ENCODE measurements at regions of chr5 and their contacts with region 1.

Region 1: GRCh38 chr5:33850100-33850594 is 41.6 kb downstream of the ADAMTS12 start:
- DNase-seq: peak; percentile 75
- ATAC-seq: no peak
- H3K4me3 ChIP-seq: no peak overlapping the region
- H3K27ac ChIP-seq: no peak overlapping the region
- H3K4me1 ChIP-seq: peaks cover 28% of the 10 kb centered on the region
- H3K27me3 ChIP-seq: no peaks in the 10 kb centered on the region
- CTCF ChIP-seq: no peak
- POLR2A ChIP-seq: no peak
- RAD21 ChIP-seq: no peak

Region 2: GRCh38 chr5:33649796-33650482 is 200.2 kb before region 1 on chr5:
- CTCF ChIA-PET with region 1: no interaction called
- POLR2A ChIA-PET with region 1: no interaction called
- dilution Hi-C with region 1: no loop called
- in situ Hi-C with region 1: no loop called
- intact Hi-C with region 1: no loop called
- DNase-seq: peak; percentile 84
- ATAC-seq: peak; percentile 98
- H3K4me3 ChIP-seq: no peak overlapping the region
- H3K27ac ChIP-seq: no peak overlapping the region
- H3K4me1 ChIP-seq: peaks cover 8% of the 10 kb centered on the region
- H3K27me3 ChIP-seq: no peaks in the 10 kb centered on the region
- CTCF ChIP-seq: no peak
- POLR2A ChIP-seq: no peak
- RAD21 ChIP-seq: no peak; the same call in 1 of the 2 replicates

Region 3: GRCh38 chr5:33901156-33901555 is 51.0 kb after region 1 on chr5:
- CTCF ChIA-PET with region 1: no interaction called
- POLR2A ChIA-PET with region 1: no interaction called
- dilution Hi-C with region 1: no loop called
- in situ Hi-C with region 1: no loop called
- intact Hi-C with region 1: loop called (anchors 1 kb)
- DNase-seq: peak; percentile 79
- ATAC-seq: peak; percentile 77
- H3K4me3 ChIP-seq: no peak overlapping the region
- H3K27ac ChIP-seq: peak overlapping the region; percentile 78; the same call in 1 of the 2 replicates
- H3K4me1 ChIP-seq: peaks cover 3% of the 10 kb centered on the region; the same call in 1 of the 2 replicates
- H3K27me3 ChIP-seq: no peaks in the 10 kb centered on the region
- CTCF ChIP-seq: no peak
- POLR2A ChIP-seq: no peak
- RAD21 ChIP-seq: no peak

Measured in IMR-90 (cell line).